Activated CD4-positive, alpha-beta T cell treated with anti-CD3 and anti-CD28 coated beads for 36 hours (primary cell): ENCODE measurements at regions of chr14 and their contacts with region 1.

Region 1: GRCh38 chr14:71181215-71182003 is 274.1 kb downstream of the PCNX1 start:
- DNase-seq: no peak
- ATAC-seq: no peak
- H3K4me3 Mint-ChIP-seq: no peak overlapping the region
- H3K27ac Mint-ChIP-seq: no peak overlapping the region
- H3K4me1 Mint-ChIP-seq: no peaks in the 10 kb centered on the region
- H3K27me3 Mint-ChIP-seq: no peaks in the 10 kb centered on the region

Region 2: DNA sequence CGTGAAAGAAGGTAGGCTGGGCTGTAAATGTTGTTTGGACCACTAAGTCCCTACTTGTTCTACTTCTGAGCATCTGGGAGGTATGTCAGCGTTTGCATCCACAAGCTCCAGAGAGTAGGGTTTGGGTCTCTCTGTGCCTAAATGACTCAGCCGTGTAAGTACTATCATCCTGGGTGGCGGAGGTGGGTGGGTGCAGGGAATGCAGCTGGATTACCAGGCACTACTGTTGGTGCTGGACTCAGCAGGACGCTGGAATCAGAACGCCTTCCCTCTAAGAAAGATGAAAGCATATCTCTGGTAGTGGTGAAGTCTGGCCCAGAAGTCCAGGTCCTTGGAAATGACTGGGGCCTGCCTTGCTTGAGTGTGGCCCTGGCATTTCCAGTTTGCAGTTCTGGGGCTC is 15.5 kb after region 1 on chr14:
- CTCF ChIA-PET with region 1: interaction called, 3 read pairs
- POLR2A ChIA-PET with region 1: no interaction called
- intact Hi-C with region 1: loop called in 1 of 2 experiments (anchors 1 kb)
- DNase-seq: no peak
- ATAC-seq: no peak
- H3K4me3 Mint-ChIP-seq: no peak overlapping the region
- H3K27ac Mint-ChIP-seq: no peak overlapping the region
- H3K4me1 Mint-ChIP-seq: peaks cover 2% of the 10 kb centered on the region
- H3K27me3 Mint-ChIP-seq: peaks cover 5% of the 10 kb centered on the region